Dorsolateral prefrontal cortex (tissue), 120 donors: ENCODE measurements at regions of chr2 and their contacts with region 1.

Region 1: DNA sequence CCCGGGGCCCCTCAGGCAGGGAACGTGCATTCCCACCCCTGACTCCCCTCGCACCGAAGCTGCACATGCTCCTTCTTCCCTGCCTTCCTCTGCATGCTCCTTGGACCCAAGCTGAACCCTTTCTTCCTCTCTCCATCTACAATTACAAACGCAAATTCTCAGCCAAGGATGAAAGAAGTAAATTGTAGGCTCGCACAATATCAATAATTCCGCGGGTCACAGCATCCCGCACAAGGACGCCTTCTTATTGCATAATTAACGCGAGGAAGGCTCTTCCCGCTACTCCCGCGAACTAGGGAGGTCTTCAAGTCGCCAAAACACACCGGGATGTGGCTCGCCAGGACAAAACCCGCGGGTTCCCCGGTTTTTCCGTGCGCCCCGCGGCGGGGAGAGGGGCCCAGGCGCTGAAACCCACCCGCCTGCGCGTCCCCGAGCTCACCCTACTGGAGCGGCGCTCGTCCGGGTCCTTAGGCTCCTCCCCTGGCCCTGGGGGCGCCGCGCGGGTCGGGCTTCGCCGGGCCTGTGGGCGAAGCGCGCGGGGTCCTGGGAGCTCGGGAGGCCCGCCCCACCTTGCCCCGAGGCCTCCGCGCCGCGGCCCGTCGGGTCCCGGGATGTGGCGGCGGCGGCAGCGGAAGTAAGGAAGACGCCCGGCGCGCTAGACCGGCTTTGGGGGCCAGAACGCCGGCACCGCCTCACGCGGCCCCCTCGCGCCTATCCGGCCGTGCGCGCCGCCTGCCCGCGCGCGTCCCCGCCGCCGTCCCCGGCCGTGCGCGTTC is at the start of gene CHST10:
- DNase-seq: peak in 7 of 10 donors; percentile 30 to 80 (median 58)
- H3K4me3 ChIP-seq: peak within 1 kb of the TSS; percentile 55 to 97 (median 88)
- H3K27ac ChIP-seq: peak within 1 kb of the TSS in 58 of 59 donors; percentile 12 to 96 (median 84)
- H3K27me3 ChIP-seq: no peaks in the 10 kb centered on the region
- CTCF ChIP-seq: peak in 12 of 56 donors; percentile 7 to 48 (median 17)
- total RNA-seq, gene CHST10: 21.5 to 67.4 (median 43.3) TPM

Region 2: GRCh38 chr2:99670768-99671734 is 746.1 kb before region 1 on chr2:
- intact Hi-C with region 1: no loop called
- DNase-seq: no peak
- H3K4me3 ChIP-seq: no peak overlapping the region
- H3K27ac ChIP-seq: no peak overlapping the region
- H3K27me3 ChIP-seq: no peaks in the 10 kb centered on the region
- CTCF ChIP-seq: no peak

Region 3: GRCh38 chr2:100562732-100563720 is 145.9 kb after region 1 on chr2 and contains the start of gene PDCL3:
- intact Hi-C with region 1: loop called (anchors 2 to 5 kb)
- DNase-seq: peak; percentile 81 to 97 (median 94)
- H3K4me3 ChIP-seq: peak within 1 kb of the TSS; percentile 63 to 99 (median 87)
- H3K27ac ChIP-seq: peak within 1 kb of the TSS; percentile 78 to 99 (median 96)
- H3K27me3 ChIP-seq: no peaks in the 10 kb centered on the region
- CTCF ChIP-seq: peak in 50 of 56 donors; percentile 3 to 72 (median 40)
- total RNA-seq, gene PDCL3: 9.0 to 26.2 (median 16.6) TPM

Region 4: DNA sequence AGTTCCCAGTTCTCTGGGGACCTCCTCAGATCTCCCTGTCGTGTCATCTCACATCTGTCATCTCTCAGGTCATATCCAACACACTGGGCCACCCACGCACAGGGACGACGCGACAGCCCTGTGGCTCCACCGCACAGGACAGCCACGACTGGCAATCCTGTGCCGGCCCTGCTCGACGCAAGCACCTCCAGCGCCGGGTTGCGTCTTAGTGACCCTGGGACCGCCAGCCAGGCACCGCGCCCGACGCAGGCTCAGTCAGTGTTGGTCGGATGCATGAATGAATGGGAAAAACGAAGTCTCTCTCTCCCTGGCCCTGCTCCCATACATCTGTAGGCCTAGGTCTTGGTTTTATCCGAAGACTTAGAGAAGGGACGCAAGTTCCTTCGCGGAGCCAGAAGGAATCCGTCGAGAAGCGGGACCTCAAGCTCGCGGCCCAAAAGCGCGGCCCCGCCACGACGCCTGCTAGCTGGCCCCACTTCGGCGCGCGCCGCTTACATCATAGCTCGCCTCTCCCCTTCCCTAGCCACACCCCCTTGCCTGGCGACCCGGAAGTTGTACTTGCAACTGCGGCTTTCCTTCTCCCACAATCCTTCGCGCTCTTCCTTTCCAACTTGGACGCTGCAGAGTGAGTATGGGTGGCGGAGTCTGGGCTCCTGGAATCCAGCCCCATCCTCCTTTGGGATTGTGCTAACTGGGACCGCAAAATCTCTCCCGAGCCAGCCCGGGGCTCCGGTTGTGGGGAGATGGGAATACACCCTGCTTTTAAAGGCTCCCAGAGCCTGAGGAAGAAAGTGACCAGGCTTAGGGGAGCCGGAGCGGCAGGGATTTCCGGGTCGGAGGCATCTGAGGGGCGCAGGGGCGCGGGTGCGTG is 584.8 kb after region 1 on chr2 and contains the start of gene RPL31:
- intact Hi-C with region 1: loop called in 1 of 2 experiments (anchors 5 kb)
- DNase-seq: peak; percentile 93 to 98 (median 96)
- H3K4me3 ChIP-seq: peak within 1 kb of the TSS; percentile 54 to 98 (median 83)
- H3K27ac ChIP-seq: peak within 1 kb of the TSS; percentile 54 to 96 (median 87)
- H3K27me3 ChIP-seq: no peaks in the 10 kb centered on the region
- CTCF ChIP-seq: peak in 31 of 56 donors; percentile 6 to 54 (median 30)
- total RNA-seq, gene RPL31: 408 to 917 (median 635) TPM